Mammary epithelial cell (primary cell): ENCODE measurements at regions of chr1 and their contacts with region 1.

Region 1: DNA sequence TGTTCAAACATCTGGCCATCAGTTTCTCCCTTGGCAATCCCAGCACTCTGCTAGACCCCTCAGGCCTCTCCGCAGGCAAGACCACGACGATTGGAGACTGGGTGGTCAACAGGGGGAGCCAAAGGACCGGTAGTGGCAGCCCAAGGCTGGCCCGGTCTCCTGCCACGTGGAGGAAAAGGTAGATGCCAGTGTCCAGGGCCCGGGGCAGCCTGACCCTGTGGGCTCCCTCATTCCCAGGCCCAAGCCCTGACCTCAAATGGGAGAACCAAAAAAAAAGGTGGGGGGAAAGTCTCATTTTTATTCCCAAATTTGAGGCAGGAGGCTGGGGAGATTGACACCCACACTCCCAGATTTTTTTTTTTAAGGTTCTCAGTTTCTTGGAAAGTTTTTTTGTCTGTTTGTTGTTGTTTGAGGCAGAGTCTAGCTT is 24.8 kb downstream of the S100A6 start:
- DNase-seq: peak; percentile 59
- H3K4me3 ChIP-seq: no peak overlapping the region
- H3K27ac ChIP-seq: peak overlapping the region; percentile 39
- H3K4me1 ChIP-seq: peaks cover 59% of the 10 kb centered on the region
- H3K27me3 ChIP-seq: no peaks in the 10 kb centered on the region
- CTCF ChIP-seq: peak; percentile 88 to 99

Region 2: DNA sequence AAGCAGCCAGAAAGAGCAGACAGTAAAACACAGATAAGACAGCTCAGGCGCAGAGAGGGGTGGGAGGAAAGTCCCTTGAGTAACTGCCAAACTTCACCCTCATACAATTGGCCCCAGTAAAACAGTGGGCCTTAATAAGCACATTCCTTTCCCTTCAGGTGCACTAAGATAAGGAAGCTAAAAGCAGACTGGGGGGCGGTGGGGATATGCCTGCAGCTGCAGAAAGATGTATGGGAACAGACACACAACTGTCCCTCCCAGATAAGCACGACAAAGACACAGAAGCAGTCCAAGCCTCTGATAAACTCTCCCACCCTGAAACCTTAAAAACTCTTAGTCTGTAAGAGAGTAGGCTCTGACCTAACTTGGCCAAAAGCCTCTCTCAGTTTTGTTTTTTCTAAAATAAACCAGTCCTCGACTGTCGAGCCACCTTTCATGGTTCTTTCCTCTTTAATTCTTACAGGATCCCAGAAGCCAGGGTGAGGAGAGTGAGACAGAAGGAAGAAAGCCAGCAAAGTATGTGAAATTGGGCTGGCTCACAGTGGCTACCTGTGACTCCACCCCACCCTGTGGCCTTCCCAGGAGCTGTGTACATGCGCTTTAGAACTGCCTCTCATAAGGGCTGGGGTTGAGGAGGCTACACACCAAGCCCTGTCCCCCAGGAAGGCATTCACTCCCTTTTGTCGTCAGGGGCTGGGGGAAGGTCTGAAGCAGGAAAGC is 167.0 kb before region 1 on chr1:
- CTCF ChIA-PET with region 1: interaction called, 13 read pairs
- dilution Hi-C with region 1: no loop called
- in situ Hi-C with region 1: no loop called
- intact Hi-C with region 1: no loop called
- DNase-seq: no peak
- H3K4me3 ChIP-seq: no peak overlapping the region
- H3K27ac ChIP-seq: no peak overlapping the region
- H3K4me1 ChIP-seq: peaks cover 14% of the 10 kb centered on the region
- H3K27me3 ChIP-seq: no peaks in the 10 kb centered on the region
- CTCF ChIP-seq: no peak

Region 3: DNA sequence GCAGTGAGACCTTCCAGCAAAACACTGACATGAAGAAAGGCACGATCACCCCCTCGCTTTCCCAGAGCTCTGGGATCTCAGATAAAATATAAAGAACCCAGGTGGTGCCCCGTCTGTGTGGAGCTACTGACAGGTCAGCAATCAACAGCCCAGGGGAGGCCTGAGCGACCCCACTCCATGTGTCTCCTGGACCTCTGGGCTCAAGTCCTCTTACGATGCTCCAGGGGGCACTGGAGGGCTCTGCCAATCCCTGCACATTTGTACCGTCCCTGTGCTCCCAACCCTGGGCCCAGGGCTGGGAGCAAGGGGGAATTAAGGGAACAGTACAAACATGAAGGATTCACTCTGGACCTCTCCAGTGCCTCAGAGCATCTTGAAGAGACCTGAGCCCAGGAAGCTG is 82.2 kb before region 1 on chr1:
- CTCF ChIA-PET with region 1: no interaction called
- dilution Hi-C with region 1: no loop called
- in situ Hi-C with region 1: no loop called
- intact Hi-C with region 1: no loop called
- DNase-seq: no peak
- H3K4me3 ChIP-seq: no peak overlapping the region
- H3K27ac ChIP-seq: no peak overlapping the region
- H3K4me1 ChIP-seq: no peaks in the 10 kb centered on the region
- H3K27me3 ChIP-seq: peaks cover 4% of the 10 kb centered on the region
- CTCF ChIP-seq: no peak

Region 4: DNA sequence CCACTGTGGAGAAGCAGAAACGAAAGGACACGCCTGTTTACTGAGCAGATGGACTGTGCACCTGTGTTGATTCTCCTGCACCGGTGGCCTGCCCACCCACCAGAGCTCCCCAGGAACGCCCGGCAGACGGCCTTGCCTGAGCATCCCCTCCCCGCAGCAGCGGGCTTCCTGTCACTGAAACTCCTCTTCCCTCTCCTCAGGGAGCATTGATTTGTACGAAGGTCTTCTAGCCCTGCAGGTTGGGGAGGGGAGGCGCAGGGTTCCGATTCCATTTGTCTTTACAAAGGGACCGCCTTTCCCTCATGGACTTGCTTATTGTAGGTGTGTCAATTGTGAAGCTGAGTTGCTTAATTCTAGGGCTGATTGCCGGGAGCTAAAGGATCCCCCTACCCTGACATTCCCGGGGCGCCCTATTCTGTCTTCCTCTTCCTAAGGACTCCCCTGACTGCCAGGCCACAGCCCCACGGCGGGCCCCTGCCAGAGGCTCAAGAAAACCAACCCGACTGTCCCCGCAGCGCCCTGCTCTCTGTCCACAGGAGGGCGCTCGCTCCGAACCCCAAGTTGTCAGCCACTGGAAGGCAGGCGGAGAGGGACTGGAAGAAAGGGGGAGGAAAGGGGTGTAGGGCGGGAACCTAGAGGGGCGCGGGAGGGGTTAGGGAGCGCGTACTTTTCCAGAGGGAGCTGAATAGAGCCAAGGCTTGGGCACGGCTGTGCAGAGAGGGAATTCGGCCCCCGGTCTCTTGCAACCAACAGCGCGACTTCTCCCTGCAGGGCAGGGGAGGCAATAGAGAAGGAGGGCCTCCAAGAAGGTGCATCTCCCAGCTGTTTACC is 22.0 kb after region 1 on chr1:
- CTCF ChIA-PET with region 1: interaction called, 5 read pairs
- dilution Hi-C with region 1: no loop called
- in situ Hi-C with region 1: no loop called
- intact Hi-C with region 1: loop called (anchors 1 kb)
- DNase-seq: peak; percentile 76
- H3K4me3 ChIP-seq: peak overlapping the region in 2 of 3 experiments; percentile 18 to 73
- H3K27ac ChIP-seq: peak overlapping the region; percentile 73
- H3K4me1 ChIP-seq: peaks cover 44% of the 10 kb centered on the region
- H3K27me3 ChIP-seq: no peaks in the 10 kb centered on the region
- CTCF ChIP-seq: peak; percentile 56 to 78

Region 5: GRCh38 chr1:153617675-153618074 is 106.7 kb after region 1 on chr1:
- CTCF ChIA-PET with region 1: interaction called, 7 read pairs
- dilution Hi-C with region 1: no loop called
- in situ Hi-C with region 1: no loop called
- intact Hi-C with region 1: loop called (anchors 1 kb)
- DNase-seq: peak; percentile 71
- H3K4me3 ChIP-seq: no peak overlapping the region
- H3K27ac ChIP-seq: peak overlapping the region; percentile 57
- H3K4me1 ChIP-seq: peaks cover 33% of the 10 kb centered on the region
- H3K27me3 ChIP-seq: no peaks in the 10 kb centered on the region
- CTCF ChIP-seq: peak; percentile 33 to 67

Region 6: GRCh38 chr1:153749408-153750005 is 238.5 kb after region 1 on chr1:
- CTCF ChIA-PET with region 1: no interaction called
- dilution Hi-C with region 1: no loop called
- in situ Hi-C with region 1: no loop called
- intact Hi-C with region 1: loop called (anchors 1 kb)
- DNase-seq: peak; percentile 62
- H3K4me3 ChIP-seq: no peak overlapping the region
- H3K27ac ChIP-seq: no peak overlapping the region
- H3K4me1 ChIP-seq: no peaks in the 10 kb centered on the region
- H3K27me3 ChIP-seq: no peaks in the 10 kb centered on the region
- CTCF ChIP-seq: peak; percentile 98 to 99